Activated T-helper 1 cell treated with anti-CD3 and anti-CD28 coated beads, Interleukin-12 subunit alpha, Interleukin-12 subunit beta, Interleukin-2, Interleukin-4 antibody, amounts not matched to agents 30 ng/mL and 10 ng/mL and 1 ng/mL, durations not matched to agents 14 hours and 24 hours and 36 hours (primary cell): ENCODE measurements at regions of chr10 and their contacts with region 1.

Region 1: GRCh38 chr10:124152916-124153826 is 59.8 kb upstream of the CHST15 start:
- DNase-seq: peak; percentile 48
- H3K4me3 Mint-ChIP-seq: no peak overlapping the region
- H3K27ac Mint-ChIP-seq: no peak overlapping the region
- H3K4me1 Mint-ChIP-seq: peaks cover 14% of the 10 kb centered on the region
- H3K27me3 Mint-ChIP-seq: peaks cover 8% of the 10 kb centered on the region

Region 2: DNA sequence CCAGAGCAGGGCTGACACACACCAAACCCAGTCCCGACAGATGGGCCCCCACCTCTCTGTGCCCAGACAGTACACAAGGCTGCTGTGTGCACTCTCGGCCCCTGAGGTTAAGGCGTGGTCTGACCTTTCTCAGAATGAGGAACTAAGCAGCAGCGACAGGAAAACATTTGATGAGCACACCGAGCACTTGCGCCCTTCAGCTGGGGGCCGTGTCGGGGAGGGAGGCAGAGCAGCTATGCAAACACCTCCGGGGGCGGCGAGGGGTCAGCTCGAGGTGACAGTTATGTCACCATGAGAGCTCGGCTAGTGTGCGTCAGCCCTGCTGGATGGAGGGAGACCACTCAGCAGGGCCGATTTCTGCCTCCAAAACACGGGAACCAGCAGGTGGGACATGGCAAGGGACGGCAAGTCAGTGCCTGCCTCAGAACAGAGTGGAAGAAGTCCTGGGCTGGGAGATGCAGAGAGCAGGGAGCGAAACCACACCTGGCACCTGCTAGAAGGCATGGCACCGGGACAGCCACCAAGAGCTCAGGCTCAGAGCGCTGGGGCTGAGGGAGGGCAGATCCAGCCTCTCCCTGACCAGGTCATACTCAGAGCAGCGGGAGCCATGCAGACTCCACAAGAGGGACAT is 117.1 kb before region 1 on chr10:
- intact Hi-C with region 1: loop called (anchors 5 kb)
- DNase-seq: peak; percentile 20
- H3K4me3 Mint-ChIP-seq: peak overlapping the region; percentile 53
- H3K27ac Mint-ChIP-seq: peak overlapping the region; percentile 70
- H3K4me1 Mint-ChIP-seq: peaks cover 21% of the 10 kb centered on the region
- H3K27me3 Mint-ChIP-seq: peaks cover 13% of the 10 kb centered on the region